ENCODE measurements at regions of chr15 and their contacts with region 1.

Region 1: DNA sequence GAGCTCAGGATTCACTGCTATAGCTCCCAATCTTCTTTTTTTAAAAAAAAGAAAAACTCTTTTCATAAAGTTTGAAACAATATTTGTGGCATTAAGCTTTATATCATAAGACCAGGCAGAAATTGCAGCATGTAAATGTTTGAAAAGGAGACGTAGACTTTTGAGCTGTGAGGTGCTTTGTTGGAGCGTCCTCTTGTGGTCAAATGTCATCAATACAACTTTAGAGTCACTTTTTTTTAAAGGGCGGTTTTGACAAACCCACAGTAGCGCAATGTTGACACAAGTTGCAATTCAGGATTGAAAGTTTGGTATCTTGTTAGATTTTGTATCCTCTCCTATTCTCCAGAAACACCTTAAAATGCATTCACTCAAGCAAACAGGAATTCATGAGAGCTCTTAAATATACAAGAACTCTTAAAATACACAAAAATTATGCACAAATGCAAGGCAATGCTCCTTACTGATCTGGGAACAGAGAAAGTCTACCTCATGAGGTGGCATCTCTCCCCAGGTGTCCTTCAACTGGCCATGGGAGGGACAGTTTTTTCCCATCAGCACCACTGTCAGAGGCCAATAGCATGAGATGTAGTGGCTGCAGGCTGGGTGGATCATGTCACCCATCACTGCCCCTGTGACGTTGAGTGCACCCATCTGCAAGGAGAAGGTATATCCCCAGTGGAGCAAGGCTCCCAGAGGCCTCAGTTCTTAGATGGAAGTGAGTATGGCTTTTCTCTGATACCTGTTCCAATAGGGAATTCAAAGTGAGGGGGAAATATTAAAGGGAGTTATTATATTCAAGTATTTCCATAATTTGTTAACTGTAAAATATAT is 70.7 kb downstream of the ANXA2 start:
- DNase-seq: peak in 1 of 3 donors; percentile 53
- ATAC-seq: peak; percentile 68
- H3K4me3 ChIP-seq: no peak overlapping the region
- H3K4me1 ChIP-seq: no peaks in the 10 kb centered on the region
- CTCF ChIP-seq: peak; percentile 25

Region 2: DNA sequence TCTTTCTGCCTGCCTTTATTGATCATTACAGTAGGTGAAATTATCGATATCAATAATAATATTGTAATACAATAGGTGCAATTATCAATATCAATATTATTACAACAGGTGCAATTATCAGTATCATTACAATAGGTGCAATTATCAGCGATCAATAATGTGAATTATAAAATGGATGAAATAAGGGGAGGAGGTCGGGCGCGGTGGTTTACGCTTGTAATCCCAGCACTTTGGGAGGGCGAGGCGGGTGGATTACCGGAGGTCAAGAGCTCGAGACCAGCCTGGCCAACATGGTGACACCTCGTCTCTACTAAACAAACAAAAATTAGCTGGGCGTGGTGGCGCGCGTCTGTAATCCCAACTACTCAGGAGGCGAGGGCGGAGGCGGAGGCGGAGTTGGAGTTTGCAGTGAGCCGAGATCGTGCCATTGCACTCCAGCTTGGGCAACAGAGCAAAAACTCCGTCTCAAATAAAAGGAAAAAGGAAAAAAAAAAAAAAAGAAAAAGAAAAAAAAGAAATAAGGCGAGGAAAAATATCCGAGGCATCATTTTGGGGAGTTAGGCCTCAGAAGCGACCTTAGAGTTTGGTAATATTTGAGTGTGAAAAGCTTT is 637.3 kb before region 1 on chr15:
- intact Hi-C with region 1: loop called in 1 of 2 experiments (anchors 10 kb)
- DNase-seq: peak; percentile 92 to 95 (median 94)
- ATAC-seq: peak; percentile 58
- H3K4me3 ChIP-seq: peak overlapping the region; percentile 86
- H3K4me1 ChIP-seq: peaks cover 31% of the 10 kb centered on the region
- CTCF ChIP-seq: no peak

Measured in mucosa of descending colon (tissue), 3 donors.